Dorsolateral prefrontal cortex (tissue), 120 donors: ENCODE measurements at regions of chr6 and their contacts with region 1.

Region 1: DNA sequence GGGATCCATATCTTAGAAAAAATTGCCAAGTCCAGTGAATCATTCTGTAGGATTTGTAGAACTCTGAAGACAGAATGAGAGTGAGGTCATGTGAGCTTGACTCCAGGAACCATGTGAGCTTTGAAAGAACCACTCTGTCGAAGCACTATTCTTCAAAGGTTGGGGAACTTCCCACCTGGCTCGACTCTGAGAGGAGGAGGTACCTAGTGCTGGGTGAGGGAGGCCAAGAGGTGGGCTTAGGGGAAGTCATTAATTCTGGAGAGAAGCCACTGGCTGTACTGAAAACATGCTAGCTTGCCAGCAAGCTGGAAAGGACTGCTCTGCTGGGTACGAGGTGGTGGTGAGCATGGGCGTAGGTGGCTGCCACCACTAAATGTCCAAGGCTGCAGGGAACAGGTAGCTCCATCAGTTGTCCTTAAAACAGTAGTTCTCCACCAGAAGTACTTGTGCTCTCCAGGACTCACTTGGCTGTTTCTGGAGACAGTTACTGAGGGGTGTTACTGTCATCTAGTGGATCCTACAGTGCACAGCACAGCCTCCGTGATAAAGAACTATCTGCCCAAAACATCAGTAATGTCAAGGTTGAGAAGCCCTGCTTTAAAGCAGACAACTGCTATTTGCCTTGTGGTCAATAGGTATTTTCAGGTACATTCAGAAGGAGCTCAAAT is 34.7 kb upstream of the SYNJ2 start:
- DNase-seq: peak in 1 of 10 donors; percentile 58
- H3K4me3 ChIP-seq: no peak overlapping the region
- H3K27ac ChIP-seq: peak overlapping the region in 48 of 59 donors; percentile 9 to 100 (median 61)
- H3K27me3 ChIP-seq: no peaks in the 10 kb centered on the region
- CTCF ChIP-seq: peak; percentile 22 to 88 (median 71)

Region 2: DNA sequence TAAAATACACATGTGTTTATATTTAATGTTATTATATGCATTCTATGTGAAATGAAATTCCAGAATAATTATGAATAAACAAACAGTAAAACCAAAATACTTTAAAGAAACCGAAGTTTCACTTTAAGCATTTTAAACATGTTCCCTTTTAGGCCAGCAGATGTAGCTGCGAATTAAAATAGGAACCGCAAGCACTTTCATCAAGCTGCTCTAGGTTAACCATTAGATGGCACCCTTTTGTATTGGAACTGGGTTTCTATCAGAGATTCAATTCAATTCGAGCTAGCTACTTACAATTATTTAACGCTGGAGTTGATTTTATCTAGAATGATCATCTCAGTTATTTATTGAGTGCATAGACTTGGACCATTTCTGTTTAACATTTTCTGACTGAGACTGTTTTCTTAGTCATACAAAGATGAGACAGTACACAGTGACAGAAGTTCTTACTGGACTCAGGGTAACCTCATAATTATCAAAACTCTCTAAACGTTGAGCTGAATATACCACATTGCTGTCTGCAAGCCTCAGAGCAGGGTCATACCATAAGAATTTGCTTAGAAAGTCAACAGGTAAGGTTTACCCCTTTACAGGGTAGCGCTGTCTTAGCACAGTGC is 632.2 kb before region 1 on chr6:
- intact Hi-C with region 1: loop called in 1 of 2 experiments (anchors 10 kb)
- DNase-seq: peak in 2 of 10 donors; percentile 24 to 31
- H3K4me3 ChIP-seq: peak overlapping the region in 3 of 59 donors; percentile 2 to 8 (median 6)
- H3K27ac ChIP-seq: peak overlapping the region in 37 of 59 donors; percentile 1 to 76 (median 29)
- H3K27me3 ChIP-seq: no peaks in the 10 kb centered on the region
- CTCF ChIP-seq: peak; percentile 72 to 99 (median 94)

Region 3: DNA sequence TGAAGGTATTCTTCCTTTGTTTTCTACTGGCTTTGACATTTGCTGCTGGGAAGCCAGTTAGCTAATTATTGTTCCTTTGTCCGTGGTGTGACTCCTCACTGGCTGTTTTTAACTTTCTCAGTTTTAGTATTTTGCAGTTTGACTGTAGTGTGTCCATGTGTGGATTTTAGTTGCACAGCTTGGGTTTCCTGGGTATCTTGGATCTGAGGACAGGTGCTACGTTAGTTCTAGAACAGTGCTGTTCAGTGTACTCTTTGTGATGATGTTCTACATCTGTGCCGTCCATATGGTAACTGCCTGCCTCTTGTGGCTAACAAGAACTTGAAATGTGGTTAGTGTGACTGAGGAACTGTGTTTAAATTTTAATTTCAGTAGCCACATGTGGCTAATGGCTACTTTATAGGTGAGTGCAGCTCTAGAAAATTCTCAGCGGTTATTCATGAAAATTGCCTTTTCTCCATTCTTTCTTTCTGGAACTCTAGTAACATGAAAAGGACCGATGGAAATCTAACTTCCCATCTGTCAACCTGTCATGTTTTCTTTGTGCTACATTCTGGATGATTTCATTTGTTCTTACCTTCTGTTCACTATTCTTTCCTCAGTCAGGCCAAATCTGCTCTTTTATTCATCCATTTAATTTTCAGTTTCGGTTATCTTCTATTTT is 116.5 kb before region 1 on chr6:
- intact Hi-C with region 1: no loop called
- DNase-seq: peak in 2 of 10 donors; percentile 9 to 45
- H3K4me3 ChIP-seq: peak overlapping the region in 32 of 59 donors; percentile 1 to 48 (median 16)
- H3K27ac ChIP-seq: peak overlapping the region; percentile 1 to 94 (median 78)
- H3K27me3 ChIP-seq: no peaks in the 10 kb centered on the region
- CTCF ChIP-seq: peak in 3 of 56 donors; percentile 14 to 22 (median 18)

Region 4: DNA sequence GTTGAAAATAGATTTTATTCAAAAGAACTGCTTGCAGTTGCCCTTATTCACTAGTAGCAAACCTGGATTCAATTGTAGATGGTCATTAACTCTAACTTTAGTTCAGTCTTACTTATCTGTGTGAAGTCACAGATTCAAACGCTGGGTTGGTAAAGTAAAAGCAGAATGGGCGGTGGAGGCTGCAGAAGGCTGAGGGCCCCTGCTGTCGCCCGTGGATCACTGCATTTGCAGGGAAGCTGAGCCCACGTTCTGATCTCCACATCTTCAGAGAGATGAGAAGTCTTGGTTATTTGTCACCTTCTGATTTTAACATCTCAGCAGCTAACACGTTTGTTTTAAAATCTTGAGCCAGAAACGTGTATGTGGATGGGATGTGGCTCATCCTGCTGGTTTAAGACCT is 48.8 kb before region 1 on chr6:
- intact Hi-C with region 1: loop called in 1 of 2 experiments (anchors 5 kb)
- DNase-seq: peak in 9 of 10 donors; percentile 47 to 76 (median 69)
- H3K4me3 ChIP-seq: peak overlapping the region in 1 of 59 donors; percentile 5
- H3K27ac ChIP-seq: peak overlapping the region in 57 of 59 donors; percentile 10 to 85 (median 71)
- H3K27me3 ChIP-seq: no peaks in the 10 kb centered on the region
- CTCF ChIP-seq: peak in 52 of 56 donors; percentile 40 to 81 (median 62)

Region 5: DNA sequence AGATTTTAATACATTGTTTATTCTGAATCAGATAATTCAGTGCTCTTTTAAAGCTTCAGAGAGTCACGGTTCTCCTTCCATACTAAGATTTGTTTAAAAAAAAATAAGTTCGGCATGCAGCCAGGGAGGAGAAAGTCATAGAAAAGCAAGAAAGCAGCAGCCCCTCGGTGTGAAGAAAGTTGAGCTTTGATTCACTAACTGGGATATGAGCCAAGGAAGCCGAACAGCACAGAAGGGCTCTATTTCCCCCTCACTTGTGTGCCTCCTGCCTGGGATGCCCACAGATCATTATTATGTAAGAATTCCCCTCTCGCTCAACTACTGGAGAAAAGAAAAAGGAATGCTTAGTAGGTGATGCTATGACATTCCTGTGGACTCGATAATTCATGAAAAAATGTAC is 34.7 kb before region 1 on chr6:
- intact Hi-C with region 1: loop called in 1 of 2 experiments (anchors 5 kb)
- DNase-seq: peak in 6 of 10 donors; percentile 18 to 63 (median 48)
- H3K4me3 ChIP-seq: peak overlapping the region in 9 of 59 donors; percentile 1 to 34 (median 3)
- H3K27ac ChIP-seq: peak overlapping the region in 58 of 59 donors; percentile 24 to 94 (median 87)
- H3K27me3 ChIP-seq: no peaks in the 10 kb centered on the region
- CTCF ChIP-seq: peak in 10 of 56 donors; percentile 5 to 36 (median 18)

Region 6: GRCh38 chr6:158270389-158271127 is 323.6 kb after region 1 on chr6:
- intact Hi-C with region 1: no loop called
- DNase-seq: peak in 1 of 10 donors; percentile 34
- H3K4me3 ChIP-seq: no peak overlapping the region
- H3K27ac ChIP-seq: peak overlapping the region in 27 of 59 donors; percentile 2 to 65 (median 31)
- H3K27me3 ChIP-seq: no peaks in the 10 kb centered on the region
- CTCF ChIP-seq: no peak